Activated CD4-positive, alpha-beta T cell treated with anti-CD3 and anti-CD28 coated beads, Interleukin-2, amount 10 ng/mL, durations not matched to agents 24 days and 14 days (primary cell): ENCODE measurements at regions of chr21 and their contacts with region 1.

Region 1: DNA sequence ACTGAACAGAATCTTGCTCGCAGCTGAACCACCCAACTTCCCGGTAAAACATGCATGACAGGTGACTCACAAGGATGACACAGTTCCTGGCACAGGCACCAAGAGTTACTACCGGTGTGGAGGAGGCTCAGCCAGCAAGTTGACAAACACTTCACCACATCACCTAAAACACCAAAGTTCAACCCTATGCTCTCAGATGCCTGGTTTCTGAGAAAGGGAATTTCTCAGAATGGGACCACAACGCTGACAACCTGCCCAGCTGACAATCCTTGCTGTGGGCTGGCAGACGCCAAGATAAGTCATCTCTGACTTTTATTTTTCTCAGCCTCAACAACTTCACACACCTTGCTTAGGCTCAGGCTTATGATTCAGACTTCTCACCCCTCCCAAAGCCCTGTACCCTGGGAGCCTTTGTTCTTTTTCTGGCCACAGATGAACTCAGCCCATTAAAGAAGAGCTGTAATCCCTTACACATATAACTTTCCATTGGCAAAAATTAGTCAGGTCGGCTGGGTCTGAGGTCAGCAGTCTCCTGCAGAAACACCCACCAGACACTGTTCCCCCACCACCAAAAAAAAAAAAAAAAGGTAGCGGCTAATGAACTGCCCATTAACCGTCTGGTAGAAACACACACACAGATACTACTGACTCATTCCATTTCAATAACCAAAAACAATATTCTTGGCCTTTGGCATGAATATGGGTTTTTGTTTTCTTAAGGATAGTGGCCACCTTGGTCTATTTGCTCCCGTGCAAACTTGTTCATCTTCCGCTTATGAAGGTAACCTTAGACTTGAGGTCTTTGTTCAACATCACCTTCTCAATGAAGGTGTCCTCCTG is 10.8 kb upstream of the TIAM1 start:
- DNase-seq: peak; percentile 95
- H3K4me3 Mint-ChIP-seq: peak overlapping the region; percentile 44
- H3K27ac Mint-ChIP-seq: peak overlapping the region; percentile 87
- H3K4me1 Mint-ChIP-seq: peaks cover 40% of the 10 kb centered on the region
- H3K27me3 Mint-ChIP-seq: peaks cover 5% of the 10 kb centered on the region

Region 2: DNA sequence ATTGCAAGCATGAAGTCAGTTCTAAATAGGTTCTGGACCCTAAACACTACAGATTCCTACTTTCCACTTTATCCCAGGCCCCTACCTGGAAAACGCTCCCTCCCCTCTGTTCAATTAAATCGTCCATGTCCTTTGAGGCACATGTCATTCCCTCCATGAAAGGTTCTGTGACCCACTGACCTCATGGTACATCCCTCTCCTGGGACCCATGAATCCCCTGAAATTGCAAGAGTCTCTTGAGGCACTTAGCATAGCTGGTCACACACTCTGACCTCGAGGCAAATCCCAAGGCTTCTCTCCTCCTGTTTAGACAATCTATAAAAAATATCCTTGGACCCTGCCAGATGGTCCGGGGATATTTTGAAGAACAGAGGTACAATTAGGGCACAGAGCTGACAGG is 282.3 kb before region 1 on chr21:
- intact Hi-C with region 1: no loop called
- DNase-seq: no peak
- H3K4me3 Mint-ChIP-seq: no peak overlapping the region
- H3K27ac Mint-ChIP-seq: no peak overlapping the region
- H3K4me1 Mint-ChIP-seq: peaks cover 4% of the 10 kb centered on the region
- H3K27me3 Mint-ChIP-seq: peaks cover 32% of the 10 kb centered on the region

Region 3: GRCh38 chr21:31185663-31186062 is 169.2 kb before region 1 on chr21:
- intact Hi-C with region 1: loop called (anchors 2 kb)
- DNase-seq: peak; percentile 76
- H3K4me3 Mint-ChIP-seq: peak overlapping the region; percentile 81
- H3K27ac Mint-ChIP-seq: peak overlapping the region; percentile 80
- H3K4me1 Mint-ChIP-seq: peaks cover 73% of the 10 kb centered on the region
- H3K27me3 Mint-ChIP-seq: no peaks in the 10 kb centered on the region

Region 4: GRCh38 chr21:31326522-31327242 is 28.1 kb before region 1 on chr21:
- intact Hi-C with region 1: loop called (anchors 1 kb)
- DNase-seq: peak; percentile 80
- H3K4me3 Mint-ChIP-seq: peak overlapping the region; percentile 74
- H3K27ac Mint-ChIP-seq: peak overlapping the region; percentile 92
- H3K4me1 Mint-ChIP-seq: peaks cover 28% of the 10 kb centered on the region
- H3K27me3 Mint-ChIP-seq: no peaks in the 10 kb centered on the region

Region 5: DNA sequence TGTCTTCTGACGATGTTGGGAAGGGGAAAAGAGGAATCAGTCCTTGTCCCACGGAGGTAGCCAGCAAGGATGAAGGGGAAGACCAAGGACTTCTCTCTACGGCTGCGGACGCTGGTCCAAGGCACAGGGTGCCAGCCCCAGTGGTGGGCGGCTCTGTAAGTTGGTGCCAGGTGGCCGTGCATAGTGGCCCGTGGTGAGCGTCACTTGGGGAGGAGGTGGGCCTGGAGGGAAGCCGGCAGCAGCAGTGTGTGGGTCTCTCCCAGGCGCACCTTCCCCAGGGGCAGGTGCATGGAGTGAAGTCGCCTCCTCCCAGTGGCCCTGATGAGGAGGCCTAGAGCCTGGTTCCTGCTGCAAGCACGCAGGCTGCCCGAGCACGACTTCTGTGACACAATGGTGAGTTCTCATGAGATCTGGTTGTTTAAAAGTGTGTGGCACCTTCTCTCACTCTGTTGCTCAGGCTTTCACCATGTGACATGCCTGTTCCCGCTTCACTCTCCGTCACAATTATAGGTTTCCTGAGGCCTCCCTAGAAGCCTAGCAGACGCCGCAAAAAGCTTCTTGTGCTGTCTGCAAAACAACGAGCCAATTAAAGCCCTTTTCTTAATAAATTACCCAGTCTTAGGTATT is 32.8 kb after region 1 on chr21:
- intact Hi-C with region 1: no loop called
- DNase-seq: no peak
- H3K4me3 Mint-ChIP-seq: no peak overlapping the region
- H3K27ac Mint-ChIP-seq: no peak overlapping the region
- H3K4me1 Mint-ChIP-seq: peaks cover 5% of the 10 kb centered on the region
- H3K27me3 Mint-ChIP-seq: peaks cover 2% of the 10 kb centered on the region

Region 6: GRCh38 chr21:31509194-31510017 is 154.6 kb after region 1 on chr21:
- intact Hi-C with region 1: loop called (anchors 1 kb)
- DNase-seq: peak; percentile 95
- H3K4me3 Mint-ChIP-seq: peak overlapping the region; percentile 63
- H3K27ac Mint-ChIP-seq: peak overlapping the region; percentile 38
- H3K4me1 Mint-ChIP-seq: peaks cover 33% of the 10 kb centered on the region
- H3K27me3 Mint-ChIP-seq: peaks cover 21% of the 10 kb centered on the region